Activated CD4-positive, alpha-beta memory T cell treated with anti-CD3 and anti-CD28 coated beads for 36 hours (primary cell): ENCODE measurements at regions of chr1 and their contacts with region 1.

Region 1: DNA sequence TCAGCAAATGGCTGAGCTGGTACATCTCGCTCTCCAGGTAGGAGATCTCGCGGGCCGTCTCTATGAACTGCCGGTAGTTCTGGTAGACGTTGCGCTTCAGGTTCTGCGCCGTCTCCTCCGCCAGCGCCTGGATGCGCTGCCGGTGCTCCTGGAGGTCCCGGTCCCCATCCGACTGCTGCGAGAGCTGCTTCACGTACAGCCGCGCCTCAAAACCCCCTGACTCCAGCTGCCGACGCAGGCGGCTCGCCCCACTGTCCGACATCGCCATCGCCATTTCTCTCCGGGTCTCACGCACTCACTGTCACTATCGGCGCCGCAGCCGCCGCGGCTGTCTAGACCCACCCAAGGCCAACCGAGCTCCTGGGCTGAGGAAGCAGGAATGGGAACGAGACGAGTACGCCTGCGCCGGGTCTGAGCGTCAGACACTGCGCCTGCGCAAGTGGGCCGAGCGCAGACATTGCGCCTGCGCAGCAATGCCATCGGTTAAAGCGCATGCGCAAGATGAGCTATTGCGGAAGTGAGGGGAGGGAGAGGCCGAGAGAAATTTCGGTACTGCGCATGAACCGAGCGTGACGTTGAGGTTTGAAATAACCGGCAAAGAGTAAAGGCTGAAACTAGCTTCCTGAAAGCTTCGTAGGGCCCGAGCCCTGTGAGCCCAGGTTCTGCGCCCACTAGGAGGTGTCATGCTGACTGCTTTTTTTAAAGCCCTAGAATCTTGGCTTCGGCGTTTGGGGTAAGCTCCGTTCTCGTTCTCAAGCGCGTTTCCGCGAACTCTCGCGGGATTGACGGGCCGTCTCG is at the start of gene EXOC8:
- DNase-seq: peak; percentile 98
- H3K4me3 Mint-ChIP-seq: peak within 1 kb of the TSS; percentile 100
- H3K27ac Mint-ChIP-seq: peak within 1 kb of the TSS; percentile 98
- H3K4me1 Mint-ChIP-seq: peaks cover 54% of the 10 kb centered on the region
- H3K27me3 Mint-ChIP-seq: peaks cover 3% of the 10 kb centered on the region
- total RNA-seq, gene EXOC8: 14.4 to 15.2 TPM

Region 2: DNA sequence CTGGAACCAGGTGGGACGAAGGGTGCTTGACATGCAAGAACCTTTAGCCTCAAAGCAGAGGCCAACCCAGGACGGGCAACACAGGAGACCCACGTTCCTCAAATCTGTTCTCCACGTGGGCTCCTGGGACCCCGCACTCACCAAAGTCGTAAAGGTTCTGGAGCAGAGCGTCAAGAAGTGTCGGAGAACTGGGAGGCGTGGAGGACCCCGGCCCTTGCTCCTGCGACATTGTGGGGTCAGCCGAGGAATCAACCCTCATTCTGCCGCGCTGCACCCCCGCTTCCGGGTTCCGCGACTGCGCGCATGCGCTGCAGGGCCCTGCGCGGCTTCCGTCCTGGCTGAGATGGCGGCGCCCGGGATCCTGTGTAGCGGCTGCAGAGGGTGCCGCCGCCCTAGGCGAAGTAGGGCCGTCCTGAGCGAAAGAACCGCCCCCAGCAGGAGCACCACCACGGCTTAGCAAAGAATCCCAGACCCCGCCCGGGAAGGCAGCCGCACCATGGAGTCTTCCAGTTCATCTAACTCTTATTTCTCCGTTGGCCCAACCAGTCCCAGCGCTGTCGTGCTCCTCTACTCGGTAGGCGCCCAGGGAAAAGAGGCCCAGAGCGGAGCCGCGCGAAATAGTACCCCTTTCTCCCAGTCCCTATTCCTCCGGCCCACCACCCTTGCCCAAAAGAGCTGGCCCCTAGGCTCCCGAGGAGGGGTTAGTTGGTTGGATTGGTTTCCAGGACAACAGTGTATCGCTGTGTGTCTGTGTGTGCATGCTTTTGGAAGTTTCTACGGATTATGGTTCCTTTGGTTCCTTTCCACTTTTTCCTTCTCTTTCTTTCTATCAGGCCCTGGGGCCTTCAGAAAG is 96.6 kb before region 1 on chr1 and contains the start of gene GNPAT:
- CTCF ChIA-PET with region 1: interaction called, 9 read pairs
- POLR2A ChIA-PET with region 1: interaction called, 4 read pairs
- intact Hi-C with region 1: loop called (anchors 1 kb)
- DNase-seq: peak; percentile 93
- H3K4me3 Mint-ChIP-seq: peak within 1 kb of the TSS; percentile 97
- H3K27ac Mint-ChIP-seq: peak within 1 kb of the TSS; percentile 92
- H3K4me1 Mint-ChIP-seq: peaks cover 54% of the 10 kb centered on the region
- H3K27me3 Mint-ChIP-seq: no peaks in the 10 kb centered on the region
- total RNA-seq, gene GNPAT: 56.2 to 60.3 TPM

Region 3: GRCh38 chr1:231272880-231273279 is 64.8 kb before region 1 on chr1:
- CTCF ChIA-PET with region 1: no interaction called
- POLR2A ChIA-PET with region 1: no interaction called
- intact Hi-C with region 1: loop called (anchors 5 kb)
- DNase-seq: no peak
- H3K4me3 Mint-ChIP-seq: no peak overlapping the region
- H3K27ac Mint-ChIP-seq: peak overlapping the region; percentile 77
- H3K4me1 Mint-ChIP-seq: peaks cover 16% of the 10 kb centered on the region
- H3K27me3 Mint-ChIP-seq: no peaks in the 10 kb centered on the region

Region 4: DNA sequence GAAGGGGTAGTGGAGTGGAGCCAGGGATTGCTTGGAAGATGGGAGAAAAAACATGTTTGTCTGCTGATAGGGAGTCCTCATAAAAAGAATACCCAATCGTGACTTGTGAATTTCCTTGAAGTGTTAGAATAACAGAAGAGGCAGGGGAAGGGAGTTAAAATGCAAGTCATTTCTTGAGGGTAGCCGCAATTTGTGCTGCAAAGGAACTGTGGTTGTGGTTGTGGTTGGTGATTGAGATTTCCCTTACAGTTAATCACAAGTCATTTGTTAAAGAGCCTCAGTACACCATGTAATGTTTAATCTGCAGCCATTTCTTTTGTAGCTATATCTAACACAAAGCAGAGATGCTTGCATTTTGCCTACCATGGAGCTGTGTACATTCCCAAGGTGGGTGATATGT is 122.9 kb after region 1 on chr1:
- CTCF ChIA-PET with region 1: no interaction called
- POLR2A ChIA-PET with region 1: no interaction called
- intact Hi-C with region 1: no loop called
- DNase-seq: peak; percentile 77
- H3K4me3 Mint-ChIP-seq: no peak overlapping the region
- H3K27ac Mint-ChIP-seq: peak overlapping the region; percentile 23
- H3K4me1 Mint-ChIP-seq: peaks cover 27% of the 10 kb centered on the region
- H3K27me3 Mint-ChIP-seq: peaks cover 61% of the 10 kb centered on the region

Region 5: DNA sequence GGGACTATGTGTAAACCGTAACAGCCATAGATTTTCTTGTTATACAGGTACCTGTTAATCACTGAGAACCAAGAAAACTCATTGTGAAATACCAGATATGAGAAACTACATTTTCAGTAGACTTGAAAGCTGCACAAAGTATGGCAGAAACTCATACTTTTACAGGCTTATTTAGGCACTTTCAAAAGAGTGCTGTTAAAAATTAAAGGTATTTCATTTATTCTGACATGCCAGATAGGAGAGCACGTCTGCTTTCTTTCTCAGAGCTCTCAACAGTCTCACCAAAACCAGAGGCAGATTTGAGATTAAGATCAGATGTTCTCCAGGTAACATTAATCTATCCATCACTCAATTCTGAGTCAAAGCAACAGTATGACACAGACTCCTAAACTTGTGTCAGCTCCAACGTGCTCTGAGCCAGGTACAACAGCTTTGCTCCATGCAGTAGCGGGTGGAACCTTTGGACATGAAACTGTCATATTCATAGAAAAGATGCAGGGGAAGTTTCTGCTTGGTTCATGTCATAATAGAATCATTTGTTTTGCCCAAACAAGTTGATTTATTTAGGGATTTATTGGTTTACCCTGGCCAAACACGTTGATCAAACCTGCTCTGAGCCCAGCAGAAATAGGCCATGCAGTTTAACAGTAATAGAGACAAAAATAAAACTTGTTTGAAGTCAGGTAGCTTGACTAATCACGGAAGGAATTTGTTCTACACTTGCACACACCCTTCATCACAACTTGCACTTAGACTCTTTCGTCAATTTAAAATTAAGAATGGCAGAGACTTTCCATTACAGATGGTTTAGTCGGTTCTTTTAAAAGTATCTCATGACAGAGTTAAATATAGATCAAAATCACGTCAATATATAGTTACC is 170.0 kb after region 1 on chr1:
- CTCF ChIA-PET with region 1: no interaction called
- POLR2A ChIA-PET with region 1: no interaction called
- intact Hi-C with region 1: no loop called
- DNase-seq: peak; percentile 31
- H3K4me3 Mint-ChIP-seq: no peak overlapping the region
- H3K27ac Mint-ChIP-seq: no peak overlapping the region
- H3K4me1 Mint-ChIP-seq: peaks cover 12% of the 10 kb centered on the region
- H3K27me3 Mint-ChIP-seq: peaks cover 15% of the 10 kb centered on the region